ENCODE measurements at regions of chr20 and their contacts with region 1.

Region 1: GRCh38 chr20:49610701-49611538 is 43.0 kb upstream of the PTGIS start:
- DNase-seq: peak; percentile 68
- H3K4me3 ChIP-seq: no peak overlapping the region
- H3K27ac ChIP-seq: no peak overlapping the region
- H3K4me1 ChIP-seq: no peaks in the 10 kb centered on the region
- H3K27me3 ChIP-seq: no peaks in the 10 kb centered on the region
- CTCF ChIP-seq: peak; percentile 98 to 100 (median 99)
- POLR2A ChIP-seq: peak; percentile 8

Region 2: GRCh38 chr20:49338061-49338460 is 272.9 kb before region 1 on chr20:
- intact Hi-C with region 1: loop called (anchors 2 kb)
- DNase-seq: no peak
- H3K4me3 ChIP-seq: no peak overlapping the region
- H3K27ac ChIP-seq: no peak overlapping the region
- H3K4me1 ChIP-seq: no peaks in the 10 kb centered on the region
- H3K27me3 ChIP-seq: no peaks in the 10 kb centered on the region
- CTCF ChIP-seq: no peak
- POLR2A ChIP-seq: no peak

Region 3: GRCh38 chr20:49501917-49502316 is 109.0 kb before region 1 on chr20:
- intact Hi-C with region 1: no loop called
- DNase-seq: no peak
- H3K4me3 ChIP-seq: no peak overlapping the region
- H3K27ac ChIP-seq: no peak overlapping the region
- H3K4me1 ChIP-seq: no peaks in the 10 kb centered on the region
- H3K27me3 ChIP-seq: no peaks in the 10 kb centered on the region
- CTCF ChIP-seq: no peak
- POLR2A ChIP-seq: no peak

Region 4: GRCh38 chr20:49541733-49542513 is 69.0 kb before region 1 on chr20:
- intact Hi-C with region 1: loop called (anchors 2 kb)
- DNase-seq: peak; percentile 40
- H3K4me3 ChIP-seq: no peak overlapping the region
- H3K27ac ChIP-seq: no peak overlapping the region
- H3K4me1 ChIP-seq: no peaks in the 10 kb centered on the region
- H3K27me3 ChIP-seq: no peaks in the 10 kb centered on the region
- CTCF ChIP-seq: peak; percentile 71 to 93 (median 91)
- POLR2A ChIP-seq: no peak

Region 5: GRCh38 chr20:49846206-49846807 is 235.4 kb after region 1 on chr20:
- intact Hi-C with region 1: loop called (anchors 2 kb)
- DNase-seq: peak; percentile 63
- H3K4me3 ChIP-seq: no peak overlapping the region
- H3K27ac ChIP-seq: no peak overlapping the region
- H3K4me1 ChIP-seq: peaks cover 5% of the 10 kb centered on the region
- H3K27me3 ChIP-seq: no peaks in the 10 kb centered on the region
- CTCF ChIP-seq: peak; percentile 48 to 76 (median 70)
- POLR2A ChIP-seq: no peak

Region 6: DNA sequence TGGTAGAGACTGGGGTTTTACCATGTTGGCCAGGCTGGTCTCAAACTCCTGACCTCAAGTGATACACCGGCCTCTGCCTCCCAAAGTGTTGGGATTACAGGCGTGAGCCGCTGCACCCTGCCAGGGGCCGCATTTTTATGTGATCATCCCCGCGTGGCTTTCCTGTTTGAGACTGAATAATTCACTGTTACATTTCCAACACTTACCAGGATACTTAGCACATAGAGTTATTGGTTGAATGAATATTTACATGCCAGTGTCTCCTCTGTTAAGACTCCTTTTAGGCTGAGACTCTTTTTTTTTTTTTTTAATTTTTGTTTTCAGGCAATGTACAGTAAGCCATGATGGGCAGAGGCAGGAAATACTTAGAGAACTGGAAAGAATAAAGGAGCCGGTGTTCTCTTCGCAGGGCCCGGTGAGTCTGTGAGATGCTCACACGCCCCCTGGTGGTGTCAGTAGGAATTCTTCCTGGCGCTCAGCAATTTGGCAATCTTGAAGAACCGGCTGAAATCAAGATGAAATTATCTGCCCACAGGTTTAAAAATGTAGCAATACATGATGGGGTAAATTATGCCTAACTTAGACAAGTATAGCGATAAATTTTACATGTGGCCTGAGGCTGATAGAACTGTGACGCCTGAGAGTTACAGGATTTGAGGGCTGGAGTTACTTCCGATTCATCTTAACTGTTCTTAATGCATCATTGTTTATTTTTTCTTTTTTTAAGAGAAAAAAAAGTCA is 317.7 kb after region 1 on chr20:
- intact Hi-C with region 1: loop called (anchors 2 kb)
- DNase-seq: peak; percentile 81
- H3K4me3 ChIP-seq: no peak overlapping the region
- H3K27ac ChIP-seq: peak overlapping the region in 1 of 2 donors; percentile 8
- H3K4me1 ChIP-seq: no peaks in the 10 kb centered on the region
- H3K27me3 ChIP-seq: no peaks in the 10 kb centered on the region
- CTCF ChIP-seq: peak; percentile 85 to 94 (median 92)
- POLR2A ChIP-seq: no peak